Activated CD8-positive, alpha-beta T cell treated with anti-CD3 and anti-CD28 coated beads, Interleukin-2, amount 10 ng/mL, durations not matched to agents 7 days and 5 days (primary cell): ENCODE measurements at regions of chr14 and their contacts with region 1.

Region 1: DNA sequence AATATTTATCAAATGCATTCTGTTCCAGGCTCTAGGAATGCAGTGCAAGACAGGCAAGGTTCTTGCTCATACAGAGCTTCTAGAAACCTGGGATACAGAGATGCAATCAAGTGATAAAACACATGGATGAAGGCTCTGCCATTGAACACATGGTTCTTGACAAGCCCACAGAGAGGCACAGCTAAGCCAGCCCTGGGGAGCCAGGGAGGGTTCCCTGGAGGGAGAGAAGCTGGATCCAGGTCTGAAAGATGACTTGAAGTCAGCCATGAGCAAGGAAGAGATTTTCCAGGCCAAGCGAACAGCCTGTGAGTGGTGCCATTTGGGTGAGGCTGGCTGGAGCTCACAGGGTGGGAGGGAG is 66.2 kb downstream of the IRF2BPL start:
- DNase-seq: no peak
- ATAC-seq: no peak
- H3K4me3 Mint-ChIP-seq: peak overlapping the region; percentile 79
- H3K27ac Mint-ChIP-seq: peak overlapping the region; percentile 98
- H3K4me1 Mint-ChIP-seq: peaks cover 89% of the 10 kb centered on the region
- H3K27me3 Mint-ChIP-seq: no peaks in the 10 kb centered on the region

Region 2: GRCh38 chr14:76862546-76863282 is 99.6 kb before region 1 on chr14:
- CTCF ChIA-PET with region 1: no interaction called
- POLR2A ChIA-PET with region 1: no interaction called
- DNase-seq: peak; percentile 31
- ATAC-seq: no peak
- H3K4me3 Mint-ChIP-seq: no peak overlapping the region
- H3K27ac Mint-ChIP-seq: no peak overlapping the region
- H3K4me1 Mint-ChIP-seq: peaks cover 20% of the 10 kb centered on the region
- H3K27me3 Mint-ChIP-seq: peaks cover 18% of the 10 kb centered on the region

Region 3: GRCh38 chr14:76911473-76911872 is 50.8 kb before region 1 on chr14:
- CTCF ChIA-PET with region 1: interaction called, 33 read pairs
- POLR2A ChIA-PET with region 1: interaction called, 3 read pairs
- DNase-seq: no peak
- ATAC-seq: no peak
- H3K4me3 Mint-ChIP-seq: no peak overlapping the region
- H3K27ac Mint-ChIP-seq: peak overlapping the region; percentile 64
- H3K4me1 Mint-ChIP-seq: peaks cover 66% of the 10 kb centered on the region
- H3K27me3 Mint-ChIP-seq: no peaks in the 10 kb centered on the region

Region 4: GRCh38 chr14:76977793-76978720 is 15.8 kb after region 1 on chr14:
- CTCF ChIA-PET with region 1: interaction called, 9 read pairs
- POLR2A ChIA-PET with region 1: interaction called, 19 read pairs
- DNase-seq: peak; percentile 85
- ATAC-seq: peak; percentile 97
- H3K4me3 Mint-ChIP-seq: peak overlapping the region; percentile 23
- H3K27ac Mint-ChIP-seq: peak overlapping the region; percentile 91
- H3K4me1 Mint-ChIP-seq: peaks cover 40% of the 10 kb centered on the region
- H3K27me3 Mint-ChIP-seq: no peaks in the 10 kb centered on the region

Region 5: DNA sequence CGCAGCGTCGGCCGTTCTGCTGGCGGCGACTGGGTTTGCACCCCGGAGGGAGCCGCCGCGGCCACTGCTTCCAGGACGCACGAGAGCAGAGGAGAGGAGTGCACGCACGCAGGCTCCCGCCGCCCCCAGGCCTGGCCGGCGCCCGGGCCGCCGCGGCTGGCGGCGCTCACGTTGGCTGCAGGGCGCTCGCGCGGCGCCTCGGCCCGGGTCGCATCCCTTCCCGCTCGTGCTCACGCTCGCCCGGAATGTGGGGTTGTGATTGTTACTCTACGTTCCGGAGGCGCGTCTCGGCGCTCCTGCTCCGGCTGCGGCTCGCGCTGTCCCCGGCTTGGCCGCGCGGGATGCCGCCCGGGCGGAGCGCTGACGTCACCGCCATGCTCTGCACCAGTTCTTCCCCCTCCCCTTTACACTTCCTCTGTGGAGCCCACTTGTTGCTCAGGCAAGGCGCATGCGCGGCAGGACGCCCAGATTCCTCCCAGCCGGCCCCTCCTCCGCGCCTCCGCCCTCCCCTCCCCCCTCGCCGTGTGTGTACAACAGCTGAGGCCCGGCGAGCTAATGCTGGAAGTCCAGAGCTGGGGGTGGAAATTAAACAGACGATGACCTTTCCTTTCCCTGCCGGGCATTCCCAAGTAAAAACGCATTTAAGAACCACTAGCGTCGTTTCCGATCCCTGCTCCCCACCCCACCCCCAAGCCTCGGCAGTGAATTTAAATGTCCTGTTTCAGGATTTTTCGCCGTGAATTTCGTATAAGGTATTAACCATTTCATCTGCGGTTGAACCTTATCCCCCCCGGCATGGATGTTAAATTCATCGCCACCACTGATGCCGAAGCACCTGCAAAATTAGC is 66.3 kb after region 1 on chr14 and contains the start of gene IRF2BPL:
- CTCF ChIA-PET with region 1: interaction called, 30 read pairs
- POLR2A ChIA-PET with region 1: interaction called, 63 read pairs
- DNase-seq: peak; percentile 96
- ATAC-seq: peak; percentile 76
- H3K4me3 Mint-ChIP-seq: peak within 1 kb of the TSS; percentile 94
- H3K27ac Mint-ChIP-seq: peak within 1 kb of the TSS; percentile 88
- H3K4me1 Mint-ChIP-seq: peaks cover 63% of the 10 kb centered on the region
- H3K27me3 Mint-ChIP-seq: no peaks in the 10 kb centered on the region
- total RNA-seq, gene IRF2BPL: 34.5 to 35.6 TPM

Region 6: GRCh38 chr14:77053046-77053841 is 91.0 kb after region 1 on chr14:
- CTCF ChIA-PET with region 1: interaction called, 18 read pairs
- POLR2A ChIA-PET with region 1: no interaction called
- DNase-seq: peak; percentile 85
- ATAC-seq: peak; percentile 96
- H3K4me3 Mint-ChIP-seq: no peak overlapping the region
- H3K27ac Mint-ChIP-seq: peak overlapping the region; percentile 68
- H3K4me1 Mint-ChIP-seq: peaks cover 28% of the 10 kb centered on the region
- H3K27me3 Mint-ChIP-seq: no peaks in the 10 kb centered on the region

Region 7: GRCh38 chr14:77105145-77105939 is 143.1 kb after region 1 on chr14:
- CTCF ChIA-PET with region 1: no interaction called
- POLR2A ChIA-PET with region 1: no interaction called
- DNase-seq: no peak
- ATAC-seq: no peak
- H3K4me3 Mint-ChIP-seq: no peak overlapping the region
- H3K27ac Mint-ChIP-seq: no peak overlapping the region
- H3K4me1 Mint-ChIP-seq: no peaks in the 10 kb centered on the region
- H3K27me3 Mint-ChIP-seq: no peaks in the 10 kb centered on the region